HCT116 (cell line): ENCODE measurements at regions of chr9 and their contacts with region 1.

Region 1: DNA sequence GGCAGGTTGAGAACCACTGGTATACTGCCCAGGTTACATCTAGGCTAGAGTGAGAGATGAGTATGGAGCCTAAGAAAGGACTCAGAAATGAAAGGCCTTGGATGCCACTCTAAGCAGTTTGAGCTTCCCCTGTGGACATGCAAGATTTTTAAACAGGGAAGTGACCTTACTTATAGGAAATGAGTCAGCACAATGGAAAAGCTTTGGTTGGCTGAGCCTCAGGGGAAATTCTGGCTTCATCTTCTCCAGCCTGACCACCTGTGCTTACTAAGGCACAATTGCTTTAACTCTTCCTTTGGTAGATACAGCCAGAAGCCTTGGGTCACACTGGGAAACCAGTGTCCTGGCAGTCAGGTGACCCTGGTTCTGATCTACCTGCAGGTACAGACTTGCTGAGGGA is 380.2 kb upstream of the ZNF462 start:
- DNase-seq: no peak
- ATAC-seq: no peak
- H3K4me3 ChIP-seq: no peak overlapping the region
- H3K27ac ChIP-seq: no peak overlapping the region
- H3K4me1 ChIP-seq: peaks cover 0 to 5% of the 10 kb centered on the region in 2 experiments; a peak in 1 of 4 replicates
- H3K27me3 ChIP-seq: no peaks in the 10 kb centered on the region
- CTCF ChIP-seq: no peak
- POLR2A ChIP-seq: no peak
- RAD21 ChIP-seq: no peak

Region 2: GRCh38 chr9:106420511-106420944 is 62.2 kb before region 1 on chr9:
- CTCF ChIA-PET with region 1: no interaction called
- POLR2A ChIA-PET with region 1: no interaction called
- RAD21 ChIA-PET with region 1: no interaction called
- intact Hi-C with region 1: no loop called
- DNase-seq: no peak
- ATAC-seq: no peak
- H3K4me3 ChIP-seq: no peak overlapping the region
- H3K27ac ChIP-seq: no peak overlapping the region
- H3K4me1 ChIP-seq: no peaks in the 10 kb centered on the region
- H3K27me3 ChIP-seq: peaks cover 7% of the 10 kb centered on the region; the same call in 1 of the 2 replicates
- CTCF ChIP-seq: no peak
- POLR2A ChIP-seq: no peak
- RAD21 ChIP-seq: no peak

Region 3: GRCh38 chr9:106432631-106433030 is 50.1 kb before region 1 on chr9:
- CTCF ChIA-PET with region 1: no interaction called
- POLR2A ChIA-PET with region 1: no interaction called
- RAD21 ChIA-PET with region 1: no interaction called
- intact Hi-C with region 1: loop called (anchors 5 kb)
- DNase-seq: no peak
- ATAC-seq: no peak
- H3K4me3 ChIP-seq: no peak overlapping the region
- H3K27ac ChIP-seq: no peak overlapping the region
- H3K4me1 ChIP-seq: no peaks in the 10 kb centered on the region
- H3K27me3 ChIP-seq: peaks cover 14% of the 10 kb centered on the region; the same call in 1 of the 2 replicates
- CTCF ChIP-seq: no peak
- POLR2A ChIP-seq: no peak
- RAD21 ChIP-seq: no peak

Region 4: DNA sequence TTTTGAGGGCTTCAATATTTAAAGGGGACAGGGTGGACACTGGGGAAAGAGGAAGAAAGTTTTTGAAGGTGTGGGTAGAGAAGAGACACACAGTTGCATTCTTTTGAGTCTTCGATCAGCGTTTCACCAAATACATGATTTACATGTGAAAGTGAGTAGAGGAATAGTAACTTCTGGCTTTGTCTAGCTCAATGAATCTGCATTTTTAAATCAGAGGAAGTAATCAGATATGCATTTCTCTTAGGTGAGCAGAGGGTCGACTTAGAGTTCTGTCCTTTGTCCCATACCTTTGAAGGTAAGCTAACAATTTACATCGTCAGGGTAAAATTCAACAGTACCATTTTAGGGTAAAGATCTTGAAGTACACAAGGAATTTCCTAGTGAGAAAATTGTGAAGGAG is 26.2 kb before region 1 on chr9:
- CTCF ChIA-PET with region 1: no interaction called
- POLR2A ChIA-PET with region 1: no interaction called
- RAD21 ChIA-PET with region 1: no interaction called
- intact Hi-C with region 1: loop called (anchors 2 kb)
- DNase-seq: no peak
- ATAC-seq: no peak
- H3K4me3 ChIP-seq: no peak overlapping the region
- H3K27ac ChIP-seq: no peak overlapping the region
- H3K4me1 ChIP-seq: no peaks in the 10 kb centered on the region
- H3K27me3 ChIP-seq: 0 out of 2 replicates have a peak, but pooled peaks cover 3% of the 10 kb centered on the region
- CTCF ChIP-seq: no peak
- POLR2A ChIP-seq: no peak
- RAD21 ChIP-seq: no peak